IMR-90 (cell line): ENCODE measurements at regions of chr1 and their contacts with region 1.

Region 1: GRCh38 chr1:78676347-78676982 is 26.8 kb downstream of the IFI44 start:
- DNase-seq: peak; percentile 78
- ATAC-seq: peak; percentile 65
- H3K4me3 ChIP-seq: no peak overlapping the region
- H3K27ac ChIP-seq: no peak overlapping the region
- H3K4me1 ChIP-seq: no peaks in the 10 kb centered on the region
- H3K27me3 ChIP-seq: no peaks in the 10 kb centered on the region; the same call in 1 of the 2 replicates
- CTCF ChIP-seq: peak; percentile 83
- POLR2A ChIP-seq: no peak
- RAD21 ChIP-seq: peak; percentile 80

Region 2: GRCh38 chr1:78126506-78126905 is 550.0 kb before region 1 on chr1:
- CTCF ChIA-PET with region 1: no interaction called
- POLR2A ChIA-PET with region 1: no interaction called
- dilution Hi-C with region 1: no loop called
- in situ Hi-C with region 1: no loop called
- intact Hi-C with region 1: loop called (anchors 1 kb)
- DNase-seq: no peak
- ATAC-seq: no peak
- H3K4me3 ChIP-seq: no peak overlapping the region
- H3K27ac ChIP-seq: no peak overlapping the region
- H3K4me1 ChIP-seq: no peaks in the 10 kb centered on the region
- H3K27me3 ChIP-seq: no peaks in the 10 kb centered on the region
- CTCF ChIP-seq: no peak
- POLR2A ChIP-seq: no peak
- RAD21 ChIP-seq: no peak

Region 3: GRCh38 chr1:78426408-78426807 is 250.1 kb before region 1 on chr1:
- CTCF ChIA-PET with region 1: no interaction called
- POLR2A ChIA-PET with region 1: no interaction called
- dilution Hi-C with region 1: no loop called
- in situ Hi-C with region 1: no loop called
- intact Hi-C with region 1: no loop called
- DNase-seq: no peak
- ATAC-seq: no peak
- H3K4me3 ChIP-seq: no peak overlapping the region
- H3K27ac ChIP-seq: no peak overlapping the region
- H3K4me1 ChIP-seq: no peaks in the 10 kb centered on the region; the same call in 1 of the 2 replicates
- H3K27me3 ChIP-seq: peaks cover 4% of the 10 kb centered on the region
- CTCF ChIP-seq: no peak
- POLR2A ChIP-seq: no peak
- RAD21 ChIP-seq: no peak